Motor neuron (in vitro differentiated cells): ENCODE measurements at regions of chr11 and their contacts with region 1.

Region 1: GRCh38 chr11:34926101-34926830 is 9.8 kb downstream of the PDHX start:
- ATAC-seq: peak in 7 of 8 experiments; percentile 43 to 76 (median 53)
- H3K4me3 ChIP-seq: no peak overlapping the region
- H3K27ac ChIP-seq: no peak overlapping the region
- H3K4me1 ChIP-seq: peaks cover 3 to 10% of the 10 kb centered on the region in 2 donors

Region 2: DNA sequence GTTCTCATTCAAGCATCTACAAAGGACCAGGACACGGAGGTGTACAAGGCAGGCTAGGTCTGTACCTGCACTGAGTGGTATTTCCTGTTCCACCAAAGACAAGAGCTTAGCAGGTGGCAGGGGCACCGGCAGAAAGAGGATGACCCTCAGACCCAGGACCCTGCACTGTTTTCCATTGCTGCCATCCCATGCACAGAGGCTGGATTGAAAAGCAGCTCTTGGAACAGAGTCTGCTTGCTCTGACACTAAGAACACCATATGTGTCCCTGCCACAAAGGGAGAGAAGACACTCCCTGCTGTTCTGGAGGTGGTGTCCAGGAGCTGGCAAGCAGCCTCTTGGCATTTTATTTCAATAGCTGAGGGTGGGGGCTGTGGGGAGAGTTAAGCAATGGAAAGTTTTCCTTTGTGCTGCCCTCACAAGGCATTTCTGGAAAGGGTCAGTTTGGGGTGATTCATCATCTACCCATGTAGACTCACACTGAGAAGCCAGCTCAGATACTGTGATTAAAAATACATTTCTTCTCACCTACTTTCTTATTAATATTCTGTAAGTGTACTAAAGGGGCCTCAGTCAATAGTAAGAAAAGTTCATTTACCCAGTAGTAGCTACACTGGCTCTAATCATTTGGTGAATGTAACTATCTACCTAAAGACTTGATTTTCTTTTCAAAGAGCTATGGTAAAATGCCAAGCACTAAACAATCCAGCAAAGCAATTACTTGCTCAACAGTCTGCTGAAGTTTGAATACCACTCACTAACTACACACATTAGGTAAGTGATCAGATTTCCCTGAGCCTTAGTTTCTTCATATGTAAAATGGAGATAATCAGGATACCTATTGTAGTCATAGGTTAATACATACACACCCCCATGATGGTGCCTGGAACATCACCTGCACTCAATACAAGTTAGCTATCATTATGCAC is 437.9 kb after region 1 on chr11:
- in situ Hi-C with region 1: loop called in 1 of 9 experiments (anchors 25 kb)
- ATAC-seq: peak; percentile 65 to 94 (median 84)
- H3K4me3 ChIP-seq: no peak overlapping the region
- H3K27ac ChIP-seq: no peak overlapping the region
- H3K4me1 ChIP-seq: peaks cover 2 to 13% of the 10 kb centered on the region in 2 donors

Region 3: GRCh38 chr11:35391922-35392813 is 465.9 kb after region 1 on chr11:
- in situ Hi-C with region 1: loop called in 2 of 9 experiments (anchors 10 to 25 kb)
- ATAC-seq: peak; percentile 78 to 95 (median 88)
- H3K4me3 ChIP-seq: no peak overlapping the region
- H3K27ac ChIP-seq: no peak overlapping the region
- H3K4me1 ChIP-seq: peaks cover 9 to 23% of the 10 kb centered on the region in 2 donors

Region 4: GRCh38 chr11:35404388-35404775 is 478.1 kb after region 1 on chr11:
- in situ Hi-C with region 1: loop called in 3 of 9 experiments (anchors 10 to 25 kb)
- ATAC-seq: peak in 4 of 8 experiments; percentile 28 to 81 (median 38)
- H3K4me3 ChIP-seq: no peak overlapping the region
- H3K27ac ChIP-seq: no peak overlapping the region
- H3K4me1 ChIP-seq: peaks cover 2 to 11% of the 10 kb centered on the region in 2 donors